HepG2 (cell line): ENCODE measurements at regions of chr4 and their contacts with region 1.

Region 1: GRCh38 chr4:158193171-158193749 is 17.0 kb upstream of the TMEM144 start:
- DNase-seq: peak; percentile 43
- ATAC-seq: peak; percentile 67
- H3K4me3 ChIP-seq: no peak overlapping the region
- H3K27ac ChIP-seq: no peak overlapping the region
- H3K4me1 ChIP-seq: no peaks in the 10 kb centered on the region
- H3K27me3 ChIP-seq: no peaks in the 10 kb centered on the region
- CTCF ChIP-seq: peak; percentile 65
- EP300 ChIP-seq: no peak
- POLR2A ChIP-seq: no peak
- RAD21 ChIP-seq: peak; percentile 27; the same call in 1 of the 2 replicates

Region 2: GRCh38 chr4:158209825-158210807 is 16.9 kb after region 1 on chr4 and contains the start of gene TMEM144:
- CTCF ChIA-PET with region 1: no interaction called
- POLR2A ChIA-PET with region 1: no interaction called
- in situ Hi-C with region 1: no loop called
- intact Hi-C with region 1: loop called (anchors 1 kb)
- DNase-seq: peak; percentile 79
- ATAC-seq: peak; percentile 100
- H3K4me3 ChIP-seq: peak within 1 kb of the TSS; percentile 60 to 71 (median 61)
- H3K27ac ChIP-seq: peak within 1 kb of the TSS; percentile 67
- H3K4me1 ChIP-seq: peaks cover 18% of the 10 kb centered on the region
- H3K27me3 ChIP-seq: no peaks in the 10 kb centered on the region
- CTCF ChIP-seq: peak; percentile 58
- EP300 ChIP-seq: 0 out of 4 replicates have a peak, but pooled peaks of 1 of the 2 experiments have one; percentile 23
- POLR2A ChIP-seq: peak; percentile 63 to 64
- RAD21 ChIP-seq: peak; percentile 38; the same call in 1 of the 2 replicates
- total RNA-seq, gene TMEM144: 10.5 and 12.3 TPM in 2 replicates

Region 3: DNA sequence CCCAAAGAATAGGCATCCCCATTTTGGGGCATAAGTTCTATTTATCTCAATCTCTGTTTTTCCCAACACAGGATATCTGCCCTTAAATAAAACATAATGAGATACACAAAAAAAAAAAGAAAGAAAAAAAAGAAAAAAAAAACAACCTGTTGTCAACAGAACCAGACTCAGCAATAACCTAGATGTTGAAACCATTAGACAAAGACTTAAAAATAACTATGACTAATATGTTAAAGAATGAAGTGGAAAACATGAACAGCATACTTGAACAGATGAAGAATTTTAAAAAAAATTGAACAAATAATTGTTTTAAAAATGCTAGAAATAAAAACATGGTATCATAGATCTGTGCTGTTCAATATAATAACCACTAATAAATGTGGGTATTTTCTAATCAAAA is 235.0 kb after region 1 on chr4:
- CTCF ChIA-PET with region 1: no interaction called
- POLR2A ChIA-PET with region 1: no interaction called
- in situ Hi-C with region 1: no loop called
- intact Hi-C with region 1: no loop called
- DNase-seq: no peak
- ATAC-seq: no peak
- H3K4me3 ChIP-seq: no peak overlapping the region
- H3K27ac ChIP-seq: no peak overlapping the region
- H3K4me1 ChIP-seq: no peaks in the 10 kb centered on the region
- H3K27me3 ChIP-seq: no peaks in the 10 kb centered on the region
- CTCF ChIP-seq: no peak
- EP300 ChIP-seq: no peak
- POLR2A ChIP-seq: no peak
- RAD21 ChIP-seq: no peak